T-cell (primary cell): ENCODE measurements at regions of chr4 and their contacts with region 1.

Region 1: GRCh38 chr4:185219551-185220344 is 10.3 kb downstream of the SNX25 start:
- DNase-seq: no peak
- ATAC-seq: no peak
- H3K4me3 ChIP-seq: no peak overlapping the region
- H3K4me3 Mint-ChIP-seq: no peak overlapping the region
- H3K27ac ChIP-seq: no peak overlapping the region
- H3K27ac Mint-ChIP-seq: no peak overlapping the region
- H3K4me1 ChIP-seq: no peaks in the 10 kb centered on the region
- H3K4me1 Mint-ChIP-seq: peaks cover 17 to 30% (median 30%) of the 10 kb centered on the region in 3 donors
- H3K27me3 ChIP-seq: no peaks in the 10 kb centered on the region
- H3K27me3 Mint-ChIP-seq: no peaks in the 10 kb centered on the region

Region 2: DNA sequence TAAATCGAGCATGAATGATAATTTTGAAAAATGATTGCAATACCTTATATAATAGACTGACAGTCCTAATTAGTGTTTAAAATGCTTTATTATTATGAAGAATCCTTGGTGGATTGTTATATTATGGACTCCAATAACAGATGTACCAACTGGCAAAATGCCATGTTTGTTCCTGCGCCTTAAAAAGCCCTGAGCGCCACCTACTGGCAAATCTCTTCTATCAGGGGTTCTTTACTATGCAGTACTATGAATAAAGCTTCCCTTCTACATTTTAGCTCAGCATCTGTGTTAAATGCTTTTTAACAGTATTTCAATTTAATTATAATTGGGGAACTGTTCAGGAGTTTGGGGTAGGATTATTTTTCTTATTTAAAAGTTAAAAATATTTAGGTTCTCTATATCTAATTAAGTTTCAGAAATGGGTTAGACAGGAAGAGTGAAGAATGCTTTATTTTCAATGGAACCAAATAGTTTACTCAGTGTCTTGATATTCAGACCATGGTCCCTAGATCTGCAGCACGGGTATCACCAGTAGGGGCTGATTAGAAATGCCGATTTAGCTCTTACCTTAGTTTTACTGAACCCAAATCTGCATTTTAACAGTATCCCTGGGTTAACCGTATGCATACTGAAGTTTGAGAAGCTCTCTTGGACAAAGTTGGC is 36.0 kb before region 1 on chr4:
- CTCF ChIA-PET with region 1: interaction called in 1 of 2 experiments, 12 read pairs
- POLR2A ChIA-PET with region 1: no interaction called
- DNase-seq: peak; percentile 39 to 93 (median 69)
- ATAC-seq: peak; percentile 54 to 78 (median 66)
- H3K4me3 ChIP-seq: no peak overlapping the region
- H3K4me3 Mint-ChIP-seq: no peak overlapping the region
- H3K27ac ChIP-seq: no peak overlapping the region
- H3K27ac Mint-ChIP-seq: no peak overlapping the region
- H3K4me1 ChIP-seq: peaks cover 0 to 5% of the 10 kb centered on the region in 2 experiments
- H3K4me1 Mint-ChIP-seq: peaks cover 38 to 48% (median 40%) of the 10 kb centered on the region in 3 donors
- H3K27me3 ChIP-seq: no peaks in the 10 kb centered on the region
- H3K27me3 Mint-ChIP-seq: no peaks in the 10 kb centered on the region

Region 3: DNA sequence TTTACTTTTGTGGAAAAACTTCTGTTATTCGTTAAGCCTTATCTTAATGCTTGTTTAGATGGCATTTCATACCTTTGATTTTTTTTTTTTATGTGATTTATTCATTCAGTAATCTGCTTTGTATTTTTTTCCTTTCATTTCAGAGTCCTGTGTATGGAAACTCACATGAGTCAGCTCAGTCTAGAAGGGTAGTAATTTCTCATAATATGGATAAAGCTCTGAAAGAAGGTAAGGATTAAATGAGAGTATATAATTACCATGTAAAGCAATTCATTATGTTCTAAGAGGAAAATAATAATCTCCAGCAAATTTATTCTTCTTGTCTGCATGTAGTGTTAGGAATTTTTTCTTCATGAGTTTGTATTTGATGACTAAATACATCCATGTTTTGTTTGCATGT is 27.4 kb after region 1 on chr4:
- CTCF ChIA-PET with region 1: no interaction called
- POLR2A ChIA-PET with region 1: interaction called in 1 of 2 experiments, 10 read pairs
- DNase-seq: no peak
- ATAC-seq: no peak
- H3K4me3 ChIP-seq: no peak overlapping the region
- H3K4me3 Mint-ChIP-seq: no peak overlapping the region
- H3K27ac ChIP-seq: no peak overlapping the region
- H3K27ac Mint-ChIP-seq: no peak overlapping the region
- H3K4me1 ChIP-seq: peaks cover 0 to 2% of the 10 kb centered on the region in 2 experiments
- H3K4me1 Mint-ChIP-seq: peaks cover 15 to 26% (median 16%) of the 10 kb centered on the region in 3 donors
- H3K27me3 ChIP-seq: no peaks in the 10 kb centered on the region
- H3K27me3 Mint-ChIP-seq: no peaks in the 10 kb centered on the region

Region 4: DNA sequence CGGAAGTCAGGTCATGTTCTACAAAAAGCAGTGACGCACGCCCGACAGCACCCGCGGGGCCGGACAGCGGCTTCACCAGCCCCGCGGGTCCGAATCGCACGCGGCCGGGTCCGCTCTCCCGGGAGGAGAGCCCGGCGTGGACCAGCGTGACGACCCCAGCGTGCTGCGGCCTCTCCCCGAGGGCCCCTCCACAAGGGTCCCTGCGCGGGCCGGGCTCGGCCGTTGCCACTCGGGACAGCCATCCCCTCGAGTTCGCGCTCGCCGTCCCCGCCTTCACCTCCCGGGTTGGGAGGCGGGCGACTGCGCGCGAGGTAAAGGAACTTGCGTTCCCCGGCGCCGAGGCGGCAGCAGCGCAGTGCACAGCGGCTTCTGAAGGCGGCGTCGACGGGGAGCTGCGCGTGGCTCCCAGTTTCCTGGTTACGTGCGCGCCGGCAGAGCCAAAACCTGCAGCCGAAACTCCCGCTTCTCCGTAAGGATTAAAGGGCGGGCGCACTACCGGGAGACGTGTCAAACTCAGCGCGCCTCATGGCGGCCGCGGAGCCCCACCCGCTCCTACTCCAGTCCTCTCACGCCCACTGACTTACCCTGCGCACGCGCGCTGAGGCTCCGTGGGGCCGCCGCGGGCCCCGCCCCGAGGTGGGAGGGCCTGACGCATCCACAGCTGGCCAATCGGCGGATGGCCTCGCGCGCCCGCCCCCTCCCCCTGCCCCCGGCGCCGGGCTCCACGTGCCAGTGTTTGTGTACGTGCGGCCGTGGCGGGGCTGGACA is 176.4 kb after region 1 on chr4:
- CTCF ChIA-PET with region 1: interaction called in 1 of 2 experiments, 8 read pairs
- POLR2A ChIA-PET with region 1: interaction called in 1 of 2 experiments, 13 read pairs
- DNase-seq: peak; percentile 88 to 98 (median 94)
- ATAC-seq: peak; percentile 91 to 96 (median 92)
- H3K4me3 ChIP-seq: peak overlapping the region; percentile 87 to 98
- H3K4me3 Mint-ChIP-seq: peak overlapping the region; percentile 90 to 95 (median 94)
- H3K27ac ChIP-seq: peak overlapping the region; percentile 96
- H3K27ac Mint-ChIP-seq: peak overlapping the region; percentile 94 to 96
- H3K4me1 ChIP-seq: peaks cover 4 to 7% of the 10 kb centered on the region in 2 experiments
- H3K4me1 Mint-ChIP-seq: peaks cover 21 to 31% (median 26%) of the 10 kb centered on the region in 3 donors
- H3K27me3 ChIP-seq: no peaks in the 10 kb centered on the region
- H3K27me3 Mint-ChIP-seq: no peaks in the 10 kb centered on the region

Region 5: GRCh38 chr4:186201535-186202230 is 981.9 kb after region 1 on chr4:
- CTCF ChIA-PET with region 1: no interaction called
- POLR2A ChIA-PET with region 1: interaction called in 1 of 2 experiments, 10 read pairs
- DNase-seq: peak; percentile 9 to 71 (median 47)
- ATAC-seq: peak; percentile 61 to 96 (median 91)
- H3K4me3 ChIP-seq: no peak overlapping the region
- H3K4me3 Mint-ChIP-seq: peak overlapping the region in 1 of 3 donors; percentile 17
- H3K27ac ChIP-seq: peak overlapping the region; percentile 52
- H3K27ac Mint-ChIP-seq: peak overlapping the region; percentile 70 to 74
- H3K4me1 ChIP-seq: no peaks in the 10 kb centered on the region
- H3K4me1 Mint-ChIP-seq: peaks cover 12 to 32% (median 18%) of the 10 kb centered on the region in 3 donors
- H3K27me3 ChIP-seq: no peaks in the 10 kb centered on the region
- H3K27me3 Mint-ChIP-seq: no peaks in the 10 kb centered on the region